ENCODE measurements at regions of chr9 and their contacts with region 1.

Region 1: DNA sequence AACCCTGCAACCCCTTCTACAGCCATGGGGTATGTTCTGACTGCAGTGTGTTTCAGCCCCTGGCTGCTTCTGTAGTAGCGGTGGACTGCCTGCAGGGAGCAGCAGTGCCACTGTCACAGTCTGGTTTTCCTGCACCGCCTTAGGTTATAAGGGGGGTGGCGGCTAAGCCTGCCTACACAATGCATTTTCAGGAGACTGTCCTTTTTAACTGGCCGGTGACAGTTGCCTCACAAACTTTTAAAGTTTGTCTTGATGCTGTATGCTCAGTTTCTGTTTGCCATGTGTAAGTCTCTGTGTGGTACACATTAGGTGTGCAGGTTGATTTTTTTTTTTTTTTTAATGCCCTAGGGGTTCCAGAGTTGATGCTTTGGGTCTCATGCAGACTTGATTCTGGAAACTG is 53.0 kb downstream of the NUP214 start:
- DNase-seq: peak; percentile 69 to 90 (median 86)
- H3K4me3 ChIP-seq: no peak overlapping the region
- H3K27ac ChIP-seq: no peak overlapping the region
- H3K4me1 ChIP-seq: peaks cover 3 to 11% (median 8%) of the 10 kb centered on the region in 4 experiments
- H3K27me3 ChIP-seq: no peaks in the 10 kb centered on the region

Region 2: DNA sequence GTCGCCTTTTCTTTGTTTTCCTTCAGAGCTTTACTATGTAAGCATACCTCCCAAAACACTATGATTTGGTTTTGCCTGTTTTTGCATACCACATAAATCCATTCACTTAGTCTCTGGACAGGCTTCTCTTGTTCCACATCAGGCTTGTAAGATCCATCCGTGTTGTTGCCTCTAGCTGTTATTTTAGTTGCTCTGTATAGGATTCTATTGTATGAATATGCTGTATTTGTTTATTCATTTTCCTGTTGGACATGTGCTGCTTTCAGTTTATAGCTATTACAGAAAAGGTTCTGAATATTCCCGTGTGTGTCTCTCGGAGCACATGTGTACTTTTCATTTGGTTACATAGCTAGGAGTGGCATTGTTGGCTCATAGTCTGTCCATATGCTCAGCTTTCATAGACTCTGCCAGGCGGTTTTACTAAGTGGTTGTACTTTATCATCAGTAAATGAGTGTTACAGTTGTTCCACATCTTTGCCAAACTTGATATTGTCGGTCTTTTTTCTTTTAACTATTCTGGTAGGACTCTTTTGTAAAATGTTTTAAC is 11.2 kb before region 1 on chr9:
- CTCF ChIA-PET with region 1: interaction called, 14 read pairs
- POLR2A ChIA-PET with region 1: interaction called, 3 read pairs
- DNase-seq: no peak
- H3K4me3 ChIP-seq: no peak overlapping the region
- H3K27ac ChIP-seq: no peak overlapping the region
- H3K4me1 ChIP-seq: no peaks in the 10 kb centered on the region
- H3K27me3 ChIP-seq: no peaks in the 10 kb centered on the region

Region 3: DNA sequence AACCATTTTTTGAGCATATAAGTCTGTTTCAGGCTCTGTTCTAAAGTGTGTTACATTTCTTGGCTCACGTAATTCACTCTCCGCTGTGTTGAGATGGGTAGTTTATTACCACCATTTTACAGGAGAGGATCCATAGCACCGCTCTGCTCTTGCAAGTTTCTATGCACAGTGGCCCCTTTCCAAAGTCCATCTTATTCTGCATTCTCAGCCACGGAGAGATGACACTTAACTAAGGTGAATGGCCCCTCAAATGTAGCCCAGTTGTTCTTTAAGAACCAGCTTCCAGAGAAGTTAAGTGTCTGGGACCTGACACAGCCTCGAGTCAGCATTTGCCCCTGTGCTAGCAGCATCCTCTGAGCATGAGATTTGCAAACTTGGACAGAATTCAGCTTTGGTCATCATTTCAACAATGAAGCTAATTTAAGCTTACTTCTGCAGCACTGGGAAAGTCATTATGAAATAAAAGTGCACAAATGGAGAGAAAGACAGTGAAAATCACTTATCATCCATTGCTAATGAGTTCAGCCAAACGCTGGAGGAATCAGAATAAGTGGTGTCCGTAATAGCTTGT is 36.0 kb after region 1 on chr9:
- CTCF ChIA-PET with region 1: interaction called, 21 read pairs
- POLR2A ChIA-PET with region 1: no interaction called
- DNase-seq: no peak
- H3K4me3 ChIP-seq: peak overlapping the region in 3 of 7 experiments; percentile 23 to 60 (median 47)
- H3K27ac ChIP-seq: peak overlapping the region in 1 of 2 experiments; percentile 57
- H3K4me1 ChIP-seq: peaks cover 4 to 50% (median 20%) of the 10 kb centered on the region in 4 experiments
- H3K27me3 ChIP-seq: no peaks in the 10 kb centered on the region

Region 4: DNA sequence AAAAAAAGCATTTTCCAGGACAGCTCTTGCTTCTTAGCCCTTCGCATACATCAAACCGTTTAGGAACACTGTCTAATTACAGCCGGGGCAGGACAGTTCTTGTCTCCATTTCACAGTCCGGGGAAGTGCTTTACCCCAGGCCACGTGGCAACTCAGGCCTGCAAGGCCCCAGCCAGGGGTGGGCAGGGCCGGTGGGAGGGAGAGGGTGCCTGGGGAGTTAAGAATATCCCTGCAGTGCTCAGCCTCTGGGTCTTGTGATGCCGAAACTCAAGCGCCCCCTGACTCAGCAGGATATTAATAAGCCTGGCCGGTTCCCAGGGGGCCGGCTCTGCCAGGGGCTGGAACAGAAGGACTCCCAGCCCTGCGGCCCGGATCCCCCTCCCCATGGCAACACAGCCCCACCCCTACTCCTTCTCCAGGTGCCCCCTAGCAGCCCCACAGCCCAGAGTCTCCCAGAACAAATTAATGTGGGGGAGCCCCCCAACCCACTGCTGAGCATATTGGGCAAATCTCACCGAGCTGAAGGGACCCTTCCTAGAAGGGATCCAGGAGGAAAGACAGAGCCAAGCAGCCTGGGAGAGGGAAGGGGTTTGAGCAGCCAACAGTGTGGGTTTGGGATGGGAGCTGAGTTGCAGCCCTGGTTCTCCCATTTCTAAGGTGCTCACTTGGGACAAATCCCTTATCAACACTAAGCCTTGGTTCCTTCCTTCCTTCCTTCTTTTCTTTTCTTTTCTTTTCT is 156.4 kb after region 1 on chr9:
- CTCF ChIA-PET with region 1: interaction called, 107 read pairs
- POLR2A ChIA-PET with region 1: interaction called, 3 read pairs
- DNase-seq: peak in 2 of 3 donors; percentile 66 to 81
- H3K4me3 ChIP-seq: peak overlapping the region in 1 of 7 experiments; percentile 11
- H3K27ac ChIP-seq: no peak overlapping the region
- H3K4me1 ChIP-seq: peaks cover 0 to 38% (median 23%) of the 10 kb centered on the region in 4 experiments
- H3K27me3 ChIP-seq: no peaks in the 10 kb centered on the region

Measured in common myeloid progenitor, CD34-positive (primary cell).